Activated CD4-positive, alpha-beta memory T cell treated with anti-CD3 and anti-CD28 coated beads for 36 hours (primary cell): ENCODE measurements at regions of chr12 and their contacts with region 1.

Region 1: GRCh38 chr12:4112734-4113325 is 160.7 kb upstream of the CCND2 start:
- DNase-seq: no peak
- H3K4me3 Mint-ChIP-seq: no peak overlapping the region
- H3K27ac Mint-ChIP-seq: peak overlapping the region; percentile 64
- H3K4me1 Mint-ChIP-seq: peaks cover 62% of the 10 kb centered on the region
- H3K27me3 Mint-ChIP-seq: peaks cover 15% of the 10 kb centered on the region

Region 2: GRCh38 chr12:3815094-3815766 is 297.6 kb before region 1 on chr12:
- CTCF ChIA-PET with region 1: no interaction called
- POLR2A ChIA-PET with region 1: no interaction called
- intact Hi-C with region 1: no loop called
- DNase-seq: no peak
- H3K4me3 Mint-ChIP-seq: no peak overlapping the region
- H3K27ac Mint-ChIP-seq: no peak overlapping the region
- H3K4me1 Mint-ChIP-seq: no peaks in the 10 kb centered on the region
- H3K27me3 Mint-ChIP-seq: no peaks in the 10 kb centered on the region

Region 3: GRCh38 chr12:4064008-4064407 is 48.8 kb before region 1 on chr12:
- CTCF ChIA-PET with region 1: no interaction called
- POLR2A ChIA-PET with region 1: no interaction called
- intact Hi-C with region 1: loop called (anchors 1 kb)
- DNase-seq: no peak
- H3K4me3 Mint-ChIP-seq: no peak overlapping the region
- H3K27ac Mint-ChIP-seq: peak overlapping the region; percentile 56
- H3K4me1 Mint-ChIP-seq: peaks cover 33% of the 10 kb centered on the region
- H3K27me3 Mint-ChIP-seq: no peaks in the 10 kb centered on the region

Region 4: GRCh38 chr12:4135919-4136605 is 23.2 kb after region 1 on chr12:
- CTCF ChIA-PET with region 1: interaction called, 34 read pairs
- POLR2A ChIA-PET with region 1: interaction called, 36 read pairs
- intact Hi-C with region 1: loop called (anchors 1 kb)
- DNase-seq: peak; percentile 91
- H3K4me3 Mint-ChIP-seq: peak overlapping the region; percentile 13
- H3K27ac Mint-ChIP-seq: peak overlapping the region; percentile 89
- H3K4me1 Mint-ChIP-seq: peaks cover 52% of the 10 kb centered on the region
- H3K27me3 Mint-ChIP-seq: no peaks in the 10 kb centered on the region